ENCODE measurements at regions of chr1 and their contacts with region 1.

Region 1: DNA sequence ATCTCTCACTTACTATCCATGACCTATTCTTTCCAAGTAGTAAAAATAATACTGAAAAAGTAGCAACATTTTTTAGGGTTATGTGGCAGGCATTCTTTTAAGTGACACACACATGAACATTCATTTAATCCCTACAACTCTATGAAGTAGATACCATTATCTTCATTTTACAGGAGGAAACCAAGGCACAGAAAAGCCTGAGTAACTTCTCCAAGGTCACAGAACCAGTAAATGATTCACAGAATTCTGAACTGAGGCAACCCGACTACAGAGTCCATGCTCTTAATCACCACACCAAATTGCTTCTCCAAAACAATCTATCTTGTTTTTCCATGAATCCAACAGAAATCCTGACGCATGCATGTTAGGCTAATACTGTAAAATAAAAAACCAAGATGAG is 17.5 kb downstream of the FUBP1 start:
- H3K4me3 Mint-ChIP-seq: no peak overlapping the region
- H3K27ac Mint-ChIP-seq: no peak overlapping the region
- H3K4me1 Mint-ChIP-seq: no peaks in the 10 kb centered on the region
- H3K27me3 Mint-ChIP-seq: no peaks in the 10 kb centered on the region

Region 2: DNA sequence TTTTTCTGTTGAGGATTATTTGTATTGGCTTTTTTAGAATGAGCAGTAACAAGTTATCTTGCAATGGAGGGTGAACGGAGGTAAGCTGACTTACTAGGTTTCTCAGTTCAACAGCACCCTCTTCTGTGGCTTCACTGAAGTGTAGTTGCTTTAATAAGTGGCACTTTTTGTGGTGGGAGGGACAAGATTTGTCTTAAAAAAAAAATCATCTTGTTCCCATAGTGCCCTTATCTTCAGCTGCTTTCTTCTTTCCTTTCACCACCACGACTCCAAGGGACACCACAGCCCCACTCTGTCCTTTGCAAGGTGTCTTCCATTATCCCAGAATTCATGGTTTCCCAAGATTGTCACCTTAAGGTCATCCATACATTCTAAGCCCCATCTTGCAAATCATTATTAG is 835.1 kb before region 1 on chr1:
- intact Hi-C with region 1: no loop called
- H3K4me3 Mint-ChIP-seq: peak overlapping the region; percentile 6
- H3K27ac Mint-ChIP-seq: no peak overlapping the region
- H3K4me1 Mint-ChIP-seq: peaks cover 12% of the 10 kb centered on the region
- H3K27me3 Mint-ChIP-seq: no peaks in the 10 kb centered on the region

Region 3: GRCh38 chr1:77579547-77579946 is 381.8 kb before region 1 on chr1:
- intact Hi-C with region 1: loop called (anchors 10 kb)
- H3K4me3 Mint-ChIP-seq: no peak overlapping the region
- H3K27ac Mint-ChIP-seq: no peak overlapping the region
- H3K4me1 Mint-ChIP-seq: no peaks in the 10 kb centered on the region
- H3K27me3 Mint-ChIP-seq: no peaks in the 10 kb centered on the region

Region 4: DNA sequence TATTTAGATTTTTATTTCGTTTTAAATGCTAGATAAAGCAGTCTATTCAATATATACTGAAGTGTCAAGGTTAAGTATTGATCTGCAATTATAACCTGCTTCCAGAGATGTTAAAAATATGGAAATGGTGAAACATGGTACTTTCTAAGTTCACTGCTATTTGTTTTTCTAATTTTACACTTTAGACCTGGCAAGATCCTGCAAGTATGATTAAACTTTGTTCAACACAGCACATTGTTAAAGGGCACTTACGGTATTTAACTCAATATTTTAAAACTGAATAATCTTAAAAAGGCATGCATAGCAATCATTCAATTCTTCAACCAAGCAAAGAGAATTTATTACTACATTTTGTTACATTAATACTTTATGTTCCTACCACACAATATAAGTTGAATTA is 243.2 kb before region 1 on chr1:
- intact Hi-C with region 1: loop called (anchors 5 kb)
- H3K4me3 Mint-ChIP-seq: no peak overlapping the region
- H3K27ac Mint-ChIP-seq: no peak overlapping the region
- H3K4me1 Mint-ChIP-seq: peaks cover 13% of the 10 kb centered on the region
- H3K27me3 Mint-ChIP-seq: no peaks in the 10 kb centered on the region

Measured in dendritic cell treated with granulocyte-macrophage colony-stimulating factor and Interleukin-4, amounts not matched to agents 40 ng/mL and 50 ng/mL, for 4 days (primary cell).